Endothelial cell of umbilical vein (primary cell): ENCODE measurements at regions of chr1 and their contacts with region 1.

Region 1: DNA sequence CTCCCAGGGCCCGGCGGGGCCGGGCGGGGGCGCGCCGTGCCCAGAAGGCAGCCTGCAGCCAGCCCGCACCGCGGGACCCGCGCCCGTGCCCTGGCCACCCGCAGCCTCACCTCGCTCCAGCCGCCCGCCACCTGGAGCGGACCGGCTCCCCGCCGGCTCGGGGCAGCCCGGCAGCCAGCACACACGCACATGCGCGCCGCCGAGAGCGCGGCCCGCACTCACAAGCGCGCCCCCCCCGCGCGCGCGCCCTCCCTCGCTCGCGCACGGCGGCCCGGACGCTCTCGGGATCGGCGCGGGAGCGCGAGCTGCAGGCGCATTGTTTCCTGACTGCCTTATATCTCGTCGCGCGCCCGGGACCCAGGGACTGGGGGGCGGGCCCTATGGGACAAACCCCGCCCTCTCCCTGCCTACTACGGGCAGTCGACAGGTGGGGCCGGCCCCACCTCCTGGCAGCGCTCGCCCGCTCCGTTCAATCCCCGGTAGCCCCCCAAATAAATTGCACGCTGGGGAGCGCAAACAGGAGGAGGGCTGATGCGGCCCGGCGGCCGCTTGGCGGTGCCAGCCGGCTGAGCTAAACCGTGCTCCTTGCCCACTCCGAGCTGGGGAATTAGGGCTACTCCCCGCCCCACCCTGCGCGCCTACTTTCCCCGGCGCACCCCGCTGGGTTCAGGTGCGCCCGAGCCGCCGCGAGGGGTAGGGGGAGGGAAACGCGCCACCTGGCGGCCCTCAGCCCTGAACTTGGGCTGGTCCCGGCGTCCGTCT is at the start of gene MYCL:
- DNase-seq: peak; percentile 67
- H3K4me3 ChIP-seq: peak within 1 kb of the TSS; percentile 36 to 62 (median 46)
- H3K27ac ChIP-seq: no peak within 1 kb of the TSS
- H3K4me1 ChIP-seq: peaks cover 14% of the 10 kb centered on the region
- H3K27me3 ChIP-seq: peaks cover 13 to 20% of the 10 kb centered on the region in 2 experiments
- CTCF ChIP-seq: peak; percentile 60 to 83
- POLR2A ChIP-seq: no peak
- total RNA-seq, gene MYCL: 1.4 and 2.1 TPM in 2 replicates

Region 2: DNA sequence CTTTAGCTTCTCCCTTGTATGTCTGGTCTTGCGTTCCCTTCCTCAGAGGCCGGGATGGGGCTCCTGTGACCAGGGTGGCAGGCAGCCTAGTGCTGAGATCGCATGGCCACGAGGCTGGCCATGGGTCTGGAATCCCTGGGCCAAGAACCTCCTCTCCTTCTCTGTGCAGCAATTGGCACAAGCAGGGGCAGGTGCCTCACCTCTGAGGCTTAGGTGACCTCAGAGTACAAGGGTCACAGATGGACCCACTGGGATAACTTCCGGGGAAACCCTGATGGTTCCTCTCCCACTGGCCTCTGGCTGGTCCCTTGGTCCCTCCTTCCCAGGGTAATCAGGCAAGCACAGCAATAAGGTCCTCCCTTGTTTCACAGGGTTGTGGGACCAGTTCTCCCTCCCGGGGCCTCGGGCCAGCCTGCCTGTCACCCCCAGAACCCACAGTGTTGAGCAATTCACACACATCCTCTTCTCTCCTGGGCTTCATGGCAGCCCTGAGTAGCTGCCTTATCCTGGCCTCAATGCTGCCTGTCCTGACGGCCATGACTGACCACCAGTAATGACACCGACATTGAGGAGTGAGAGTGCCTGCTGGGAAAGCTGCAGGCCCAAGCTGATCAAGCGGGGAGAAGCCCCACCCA is 371.9 kb before region 1 on chr1:
- CTCF ChIA-PET with region 1: no interaction called
- POLR2A ChIA-PET with region 1: no interaction called
- dilution Hi-C with region 1: no loop called
- intact Hi-C with region 1: no loop called
- DNase-seq: no peak
- H3K4me3 ChIP-seq: no peak overlapping the region
- H3K27ac ChIP-seq: no peak overlapping the region
- H3K4me1 ChIP-seq: no peaks in the 10 kb centered on the region
- H3K27me3 ChIP-seq: no peaks in the 10 kb centered on the region
- CTCF ChIP-seq: no peak
- POLR2A ChIP-seq: no peak

Region 3: DNA sequence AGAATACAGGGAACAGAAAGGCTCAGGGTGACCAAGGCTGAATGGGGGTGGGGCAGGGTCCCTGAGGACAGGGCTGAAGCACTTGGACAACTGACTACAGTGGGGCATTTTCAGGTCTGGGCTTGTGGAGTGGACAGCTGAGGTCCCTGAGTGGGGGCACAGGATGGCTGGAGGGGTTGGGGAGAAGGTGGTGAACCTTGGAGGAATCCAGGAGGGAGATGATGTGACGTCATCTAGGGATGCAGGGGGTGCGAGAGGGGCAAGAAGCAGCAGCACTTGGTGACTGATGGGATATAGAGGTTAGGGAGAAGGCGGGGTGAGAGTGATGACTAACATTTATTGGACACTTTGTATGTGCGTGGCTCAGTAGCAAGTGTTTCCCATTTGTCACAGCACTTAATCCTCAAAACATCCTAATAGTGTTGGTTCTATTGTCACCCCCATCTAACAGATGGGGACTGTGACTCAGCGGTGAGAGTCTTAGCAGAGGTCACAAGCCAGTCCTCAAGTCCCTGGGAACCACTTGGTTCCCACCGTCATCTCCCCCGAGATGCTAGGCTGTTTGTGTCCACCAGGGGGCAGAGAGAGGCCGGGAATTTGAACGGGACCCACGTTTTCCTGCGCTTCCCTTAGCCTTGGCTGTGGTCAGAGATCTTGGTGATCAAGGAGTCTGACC is 85.3 kb before region 1 on chr1:
- CTCF ChIA-PET with region 1: interaction called, 102 read pairs
- POLR2A ChIA-PET with region 1: no interaction called
- dilution Hi-C with region 1: no loop called
- intact Hi-C with region 1: loop called (anchors 1 kb)
- DNase-seq: peak; percentile 78
- H3K4me3 ChIP-seq: no peak overlapping the region
- H3K27ac ChIP-seq: no peak overlapping the region
- H3K4me1 ChIP-seq: no peaks in the 10 kb centered on the region
- H3K27me3 ChIP-seq: no peaks in the 10 kb centered on the region
- CTCF ChIP-seq: peak; percentile 77 to 78
- POLR2A ChIP-seq: no peak

Region 4: GRCh38 chr1:39845275-39846116 is 56.4 kb before region 1 on chr1:
- CTCF ChIA-PET with region 1: interaction called, 54 read pairs
- POLR2A ChIA-PET with region 1: interaction called, 4 read pairs
- dilution Hi-C with region 1: no loop called
- intact Hi-C with region 1: loop called (anchors 5 kb)
- DNase-seq: peak; percentile 96
- H3K4me3 ChIP-seq: no peak overlapping the region
- H3K27ac ChIP-seq: no peak overlapping the region
- H3K4me1 ChIP-seq: peaks cover 8% of the 10 kb centered on the region
- H3K27me3 ChIP-seq: no peaks in the 10 kb centered on the region
- CTCF ChIP-seq: no peak
- POLR2A ChIP-seq: no peak

Region 5: DNA sequence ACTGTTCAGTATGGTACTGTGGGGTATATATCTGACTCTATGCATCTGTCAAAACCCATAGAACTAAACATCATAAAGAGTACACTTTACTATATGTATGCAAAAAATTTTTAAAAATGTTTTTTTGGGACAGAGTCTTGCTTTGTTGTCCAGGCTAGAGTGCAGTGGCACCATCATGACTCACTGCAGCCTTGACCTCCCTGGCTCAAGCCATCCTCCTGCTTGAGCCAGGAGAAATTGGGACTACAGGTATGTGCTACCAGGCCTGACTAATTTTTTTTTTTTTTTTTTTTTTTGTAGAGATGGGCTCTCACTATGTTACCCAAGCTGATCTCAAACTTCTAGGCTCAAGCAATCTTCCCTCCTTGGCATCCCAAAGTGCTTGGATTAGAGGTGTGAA is 30.1 kb before region 1 on chr1:
- CTCF ChIA-PET with region 1: interaction called, 4 read pairs
- POLR2A ChIA-PET with region 1: no interaction called
- dilution Hi-C with region 1: no loop called
- intact Hi-C with region 1: loop called (anchors 1 kb)
- DNase-seq: no peak
- H3K4me3 ChIP-seq: no peak overlapping the region
- H3K27ac ChIP-seq: no peak overlapping the region
- H3K4me1 ChIP-seq: no peaks in the 10 kb centered on the region
- H3K27me3 ChIP-seq: no peaks in the 10 kb centered on the region
- CTCF ChIP-seq: no peak
- POLR2A ChIP-seq: no peak

Region 6: DNA sequence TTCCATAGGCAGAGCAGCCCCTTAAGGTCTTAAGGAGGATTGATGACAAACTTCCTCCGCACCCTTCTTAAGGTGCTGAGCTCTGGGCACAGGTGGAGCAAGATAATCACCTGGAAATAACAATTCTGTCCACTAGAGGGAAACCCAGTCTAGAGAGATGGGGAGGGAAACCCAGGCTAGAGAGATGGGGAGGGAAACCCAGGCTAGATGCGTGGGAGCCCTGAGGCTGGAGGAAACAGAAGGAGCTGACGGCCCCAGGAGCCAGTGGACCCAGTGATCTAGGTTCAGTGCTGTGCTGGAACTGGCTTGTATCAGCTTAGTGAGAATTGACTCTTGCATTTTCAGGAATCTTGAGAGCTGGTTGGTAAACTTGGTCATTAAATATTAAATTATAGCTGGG is 17.7 kb after region 1 on chr1:
- CTCF ChIA-PET with region 1: interaction called, 34 read pairs
- POLR2A ChIA-PET with region 1: no interaction called
- dilution Hi-C with region 1: no loop called
- intact Hi-C with region 1: no loop called
- DNase-seq: peak; percentile 49
- H3K4me3 ChIP-seq: no peak overlapping the region
- H3K27ac ChIP-seq: no peak overlapping the region
- H3K4me1 ChIP-seq: no peaks in the 10 kb centered on the region
- H3K27me3 ChIP-seq: peaks cover 0 to 10% of the 10 kb centered on the region in 2 experiments
- CTCF ChIP-seq: peak; percentile 27 to 38
- POLR2A ChIP-seq: no peak

Region 7: DNA sequence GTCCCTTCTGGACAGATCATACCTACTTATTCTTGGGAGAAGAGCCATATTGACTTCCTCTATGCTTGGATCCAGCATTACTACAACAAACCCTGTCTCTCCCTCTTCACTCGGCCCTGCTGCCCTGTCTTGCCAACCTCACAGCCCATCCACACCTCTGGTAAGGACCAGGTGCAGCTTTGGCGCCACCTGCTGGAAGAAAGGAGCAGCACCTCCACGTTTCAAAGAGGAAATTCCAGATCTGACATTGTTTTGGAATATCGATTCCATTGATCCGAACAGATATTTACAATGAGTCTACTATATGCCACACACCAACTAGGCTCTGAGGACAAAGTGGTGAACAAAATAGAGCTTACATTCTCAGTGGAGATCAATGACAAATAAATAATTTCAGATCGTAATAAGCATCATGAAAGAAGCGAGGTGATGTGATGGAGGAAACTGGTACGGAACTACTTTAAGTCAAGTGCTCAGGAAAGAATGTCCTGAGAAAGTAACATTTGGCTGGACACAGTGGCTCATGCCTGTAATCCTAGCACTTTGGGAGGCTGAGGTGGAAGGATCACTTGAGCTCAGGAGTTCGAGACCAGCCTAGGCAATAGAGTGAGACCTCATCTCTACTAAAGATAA is 71.7 kb after region 1 on chr1:
- CTCF ChIA-PET with region 1: interaction called, 33 read pairs
- POLR2A ChIA-PET with region 1: no interaction called
- dilution Hi-C with region 1: no loop called
- intact Hi-C with region 1: loop called (anchors 1 kb)
- DNase-seq: peak; percentile 63
- H3K4me3 ChIP-seq: no peak overlapping the region
- H3K27ac ChIP-seq: no peak overlapping the region
- H3K4me1 ChIP-seq: no peaks in the 10 kb centered on the region
- H3K27me3 ChIP-seq: no peaks in the 10 kb centered on the region
- CTCF ChIP-seq: peak; percentile 87 to 94
- POLR2A ChIP-seq: no peak